Sciatic nerve (tissue), 2 donors: ENCODE measurements at regions of chr3 and their contacts with region 1.

Region 1: GRCh38 chr3:34008191-34008590 is 209.8 kb downstream of the PDCD6IP start:
- DNase-seq: no peak
- ATAC-seq: no peak

Region 2: DNA sequence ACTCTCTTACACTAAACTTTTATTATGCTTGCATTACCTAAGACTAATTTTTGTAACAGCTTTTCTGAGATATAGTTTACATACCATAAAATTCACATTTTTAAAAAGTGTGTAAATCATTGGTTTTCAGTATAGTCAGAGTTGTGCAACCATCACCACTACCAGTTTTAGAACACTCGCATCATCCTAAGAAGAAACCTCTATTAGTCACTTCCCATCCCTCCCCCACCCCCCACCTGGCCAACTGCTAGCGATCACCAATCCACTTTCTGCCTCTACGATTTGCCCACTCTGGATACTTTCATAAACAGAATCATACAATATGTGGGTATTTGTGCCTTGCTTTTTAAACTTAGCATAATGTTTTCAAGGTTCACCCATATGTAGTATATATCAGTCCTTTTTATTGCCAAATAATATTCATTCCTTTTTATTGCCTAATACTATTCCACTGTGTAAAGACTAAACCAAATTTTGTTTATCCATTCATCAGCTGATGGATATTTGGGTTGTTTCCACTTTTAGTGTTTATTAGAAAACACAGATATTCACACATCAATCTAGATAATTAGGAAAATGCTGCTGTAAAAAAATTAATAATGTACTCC is 591.0 kb before region 1 on chr3:
- intact Hi-C with region 1: loop called (anchors 5 kb)
- DNase-seq: no peak
- ATAC-seq: no peak

Region 3: GRCh38 chr3:33942483-33943150 is 65.6 kb before region 1 on chr3:
- intact Hi-C with region 1: no loop called
- DNase-seq: no peak
- ATAC-seq: no peak